ENCODE measurements at regions of chr1 and their contacts with region 1.

Region 1: GRCh38 chr1:218938259-218938658 is 235.4 kb upstream of the LYPLAL1 start:
- DNase-seq: peak; percentile 83
- ATAC-seq: peak; percentile 72
- H3K4me3 ChIP-seq: no peak overlapping the region
- H3K27ac ChIP-seq: peak overlapping the region; percentile 70
- H3K4me1 ChIP-seq: peaks cover 24% of the 10 kb centered on the region
- H3K27me3 ChIP-seq: no peaks in the 10 kb centered on the region
- CTCF ChIP-seq: no peak

Region 2: DNA sequence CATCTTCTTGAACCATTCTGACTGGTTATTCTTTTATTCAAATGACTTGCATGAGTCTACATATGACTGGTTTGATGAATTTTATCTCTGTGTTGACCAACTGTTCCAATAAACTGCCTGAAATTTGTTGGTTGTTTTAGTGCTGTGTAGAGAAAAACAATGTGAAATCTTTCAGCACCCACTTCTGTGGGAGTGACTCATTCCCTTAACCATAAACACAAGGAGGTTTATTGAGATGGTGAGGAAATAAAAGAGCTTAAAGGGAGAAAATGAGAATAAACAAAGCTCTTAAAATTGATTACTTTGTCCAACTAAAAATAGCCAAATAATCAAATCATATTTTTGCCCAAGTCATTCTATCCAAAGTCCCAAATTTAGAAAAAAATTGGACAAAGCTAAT is 252.0 kb before region 1 on chr1:
- CTCF ChIA-PET with region 1: no interaction called
- POLR2A ChIA-PET with region 1: no interaction called
- intact Hi-C with region 1: loop called (anchors 2 kb)
- DNase-seq: peak; percentile 82
- ATAC-seq: peak; percentile 84
- H3K4me3 ChIP-seq: no peak overlapping the region
- H3K27ac ChIP-seq: no peak overlapping the region
- H3K4me1 ChIP-seq: peaks cover 7% of the 10 kb centered on the region; the same call in 1 of the 2 replicates
- H3K27me3 ChIP-seq: no peaks in the 10 kb centered on the region
- CTCF ChIP-seq: no peak

Region 3: GRCh38 chr1:218804014-218804785 is 134.1 kb before region 1 on chr1:
- CTCF ChIA-PET with region 1: no interaction called
- POLR2A ChIA-PET with region 1: no interaction called
- intact Hi-C with region 1: loop called (anchors 1 kb)
- DNase-seq: peak; percentile 93
- ATAC-seq: peak; percentile 92
- H3K4me3 ChIP-seq: no peak overlapping the region
- H3K27ac ChIP-seq: peak overlapping the region; percentile 77
- H3K4me1 ChIP-seq: peaks cover 31% of the 10 kb centered on the region
- H3K27me3 ChIP-seq: no peaks in the 10 kb centered on the region
- CTCF ChIP-seq: no peak